ENCODE measurements at regions of chr14 and their contacts with region 1.

Region 1: GRCh38 chr14:23301288-23301968 is 1.2 kb downstream of the PPP1R3E start:
- DNase-seq: peak; percentile 97 to 99
- ATAC-seq: peak; percentile 83 to 92 (median 88)
- H3K4me3 ChIP-seq: peak overlapping the region; percentile 66 to 94 (median 81)
- H3K27ac ChIP-seq: peak overlapping the region; percentile 94 to 100 (median 98)
- H3K4me1 ChIP-seq: peaks cover 7 to 52% (median 41%) of the 10 kb centered on the region in 9 donors
- H3K27me3 ChIP-seq: no peaks in the 10 kb centered on the region
- CTCF ChIP-seq: peak; percentile 51 to 94 (median 75)

Region 2: GRCh38 chr14:23286020-23286905 is 15.2 kb before region 1 on chr14 and contains the start of gene HOMEZ:
- intact Hi-C with region 1: loop called in 6 of 10 experiments (anchors 1 to 2 kb)
- DNase-seq: peak; percentile 99
- ATAC-seq: peak; percentile 98 to 100 (median 99)
- H3K4me3 ChIP-seq: peak within 1 kb of the TSS; percentile 67 to 95 (median 90)
- H3K27ac ChIP-seq: peak within 1 kb of the TSS; percentile 77 to 97 (median 94)
- H3K4me1 ChIP-seq: peaks cover 0 to 29% (median 22%) of the 10 kb centered on the region in 9 donors
- H3K27me3 ChIP-seq: no peaks in the 10 kb centered on the region
- CTCF ChIP-seq: peak in 7 of 9 donors; percentile 12 to 59 (median 39)
- total RNA-seq, gene HOMEZ: 5.7 to 13.4 (median 9.5) TPM

Region 3: GRCh38 chr14:24141097-24141880 is 839.9 kb after region 1 on chr14 and contains the start of gene EMC9:
- intact Hi-C with region 1: loop called in 1 of 10 experiments (anchors 10 kb)
- DNase-seq: peak; percentile 100
- ATAC-seq: peak; percentile 92 to 97 (median 95)
- H3K4me3 ChIP-seq: peak within 1 kb of the TSS; percentile 66 to 88 (median 74)
- H3K27ac ChIP-seq: peak within 1 kb of the TSS; percentile 73 to 94 (median 90)
- H3K4me1 ChIP-seq: peaks cover 22 to 81% (median 53%) of the 10 kb centered on the region in 9 donors
- H3K27me3 ChIP-seq: no peaks in the 10 kb centered on the region
- CTCF ChIP-seq: peak; percentile 38 to 78 (median 63)
- total RNA-seq, gene EMC9: 10.2 to 18.8 (median 13.3) TPM

Measured in heart right ventricle (tissue), 16 donors.